A549 (cell line): ENCODE measurements at regions of chr1 and their contacts with region 1.

Region 1: DNA sequence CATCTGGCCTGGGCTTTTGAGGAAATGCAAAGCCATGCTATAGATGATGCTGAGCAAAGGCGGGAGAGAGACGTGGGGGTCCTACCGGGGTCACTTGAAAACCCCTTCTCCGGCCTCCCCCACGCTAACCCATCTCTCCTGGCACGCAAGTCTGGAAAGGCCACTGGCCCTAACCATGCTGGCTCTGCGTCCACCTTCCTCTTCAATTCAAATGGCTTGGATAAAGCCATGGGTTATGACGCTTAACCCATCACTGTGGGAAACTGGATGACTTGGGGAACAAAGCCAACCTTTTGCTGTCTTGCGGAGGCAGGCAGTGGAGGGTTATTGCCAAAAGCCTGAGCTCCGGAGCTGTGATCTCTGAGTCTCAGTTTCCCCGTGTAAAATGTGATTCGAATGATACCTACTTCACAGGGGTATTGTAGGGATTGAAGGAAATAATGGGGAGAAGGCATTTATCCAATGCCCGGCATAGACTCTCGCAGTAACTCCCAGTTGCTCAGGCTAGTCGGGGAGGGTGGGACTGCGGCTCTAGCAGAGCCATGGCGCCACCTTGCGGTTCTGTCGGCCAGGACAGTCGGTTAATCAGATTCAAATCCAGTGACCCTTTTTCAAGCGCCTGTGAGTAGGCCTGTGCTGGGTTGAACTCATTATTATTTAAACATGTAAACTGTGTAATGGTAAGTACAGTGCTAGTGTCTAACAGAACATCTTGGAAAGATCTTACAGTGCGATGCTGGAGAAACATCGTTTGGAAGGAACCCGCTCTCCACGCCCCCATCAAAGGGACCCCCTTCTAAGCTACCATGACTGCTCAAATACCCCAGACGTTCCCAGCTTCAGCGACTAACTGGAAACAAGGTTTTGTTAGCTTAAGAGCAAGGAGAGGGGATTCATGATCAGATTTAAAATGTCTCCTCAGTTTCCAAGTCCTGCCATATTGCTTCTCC is 20.3 kb downstream of the NEK2 start:
- DNase-seq: peak; percentile 66 to 85
- ATAC-seq: peak; percentile 90 to 97
- H3K4me3 ChIP-seq: no peak overlapping the region
- H3K27ac ChIP-seq: peak overlapping the region; percentile 39 to 64; a peak in 4 of 6 replicates
- H3K4me1 ChIP-seq: peaks cover 25% of the 10 kb centered on the region
- CTCF ChIP-seq: peak; percentile 97
- EP300 ChIP-seq: no peak
- POLR2A ChIP-seq: no peak
- RAD21 ChIP-seq: peak; percentile 99

Region 2: DNA sequence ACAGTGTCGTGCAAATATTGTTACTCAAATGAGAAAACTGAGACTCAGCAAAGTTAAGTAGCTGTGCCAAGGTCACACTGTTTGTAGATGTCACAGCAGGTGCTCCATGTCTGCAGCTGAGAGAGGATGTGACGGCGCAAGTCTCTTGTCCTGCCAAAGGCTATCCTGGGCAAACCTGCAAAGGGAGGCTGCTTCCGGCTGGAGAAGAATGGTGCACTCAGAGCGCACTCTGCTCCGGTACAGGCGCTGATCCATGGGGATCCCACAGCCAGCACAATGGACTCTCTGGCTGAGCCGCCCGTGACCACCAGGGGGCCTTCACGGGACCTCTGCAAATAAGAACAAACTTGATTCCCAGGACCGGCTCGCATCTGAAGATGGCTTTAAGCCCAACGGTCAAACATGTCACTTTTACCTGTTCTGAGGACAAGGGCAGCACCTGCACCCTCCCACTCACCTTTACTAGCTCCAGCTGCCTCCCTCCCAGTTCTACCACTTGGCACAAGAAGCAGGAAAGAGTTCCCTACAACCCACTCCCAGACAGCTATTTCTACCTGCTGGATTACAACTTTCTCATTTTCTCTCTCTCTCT is 185.1 kb before region 1 on chr1:
- CTCF ChIA-PET with region 1: interaction called, 31 read pairs
- POLR2A ChIA-PET with region 1: no interaction called
- DNase-seq: peak; percentile 83
- ATAC-seq: peak; percentile 98 to 100
- H3K4me3 ChIP-seq: no peak overlapping the region
- H3K27ac ChIP-seq: 0 out of 6 replicates have a peak overlapping the region, but pooled peaks of 1 of the 2 experiments have one; percentile 4
- H3K4me1 ChIP-seq: 0 out of 3 replicates have a peak, but pooled peaks cover 7% of the 10 kb centered on the region
- CTCF ChIP-seq: peak; percentile 83
- EP300 ChIP-seq: no peak
- POLR2A ChIP-seq: no peak
- RAD21 ChIP-seq: peak; percentile 62 to 64

Region 3: DNA sequence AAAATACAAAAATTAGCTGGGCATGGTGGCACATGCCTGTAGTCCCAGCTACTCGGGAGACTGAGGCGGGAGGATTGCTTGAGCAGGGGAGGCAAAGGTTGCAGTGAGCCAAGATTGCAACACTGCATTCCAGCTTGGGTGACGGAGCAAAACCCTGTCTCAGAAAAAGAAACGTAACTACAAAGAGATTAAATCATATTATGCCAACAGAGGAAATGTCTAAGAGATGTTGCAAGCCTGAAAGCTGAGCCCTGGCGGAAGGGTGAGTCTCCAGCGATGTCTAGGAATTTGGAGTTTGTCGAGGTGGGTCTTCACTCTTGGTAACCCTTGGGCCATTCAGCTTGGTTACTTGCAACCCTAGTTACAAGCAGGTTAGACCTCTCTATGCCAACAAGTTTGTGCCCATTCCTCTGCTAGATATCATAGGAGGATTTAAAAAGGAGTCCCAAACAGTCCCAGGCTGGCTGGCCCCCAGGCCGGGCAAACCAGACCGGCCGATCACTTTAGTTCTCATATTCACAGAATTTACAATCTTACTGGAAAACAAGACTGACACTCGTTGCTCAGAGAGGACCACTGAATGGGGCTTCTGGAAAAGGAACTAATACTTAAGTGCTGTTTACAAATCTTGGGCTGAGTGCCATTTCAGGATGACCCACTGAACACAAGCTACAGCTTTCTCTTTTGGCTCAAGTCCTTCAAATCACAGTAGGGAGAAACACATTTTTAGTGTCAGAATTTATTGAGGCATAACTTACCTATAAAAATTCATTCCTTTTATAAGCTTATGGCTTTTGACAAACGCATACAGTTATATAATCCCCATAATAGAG is 103.3 kb before region 1 on chr1:
- CTCF ChIA-PET with region 1: interaction called, 13 read pairs
- POLR2A ChIA-PET with region 1: interaction called, 3 read pairs
- DNase-seq: peak in 1 of 2 experiments; percentile 29
- ATAC-seq: peak in 1 of 2 experiments; percentile 75; a peak in 3 of 6 replicates
- H3K4me3 ChIP-seq: no peak overlapping the region
- H3K27ac ChIP-seq: peak overlapping the region; percentile 34 to 69; a peak in 5 of 6 replicates
- H3K4me1 ChIP-seq: peaks cover 13% of the 10 kb centered on the region
- CTCF ChIP-seq: no peak
- EP300 ChIP-seq: peak in 1 of 2 experiments; percentile 45; a peak in 1 of 5 replicates
- POLR2A ChIP-seq: no peak
- RAD21 ChIP-seq: no peak

Region 4: DNA sequence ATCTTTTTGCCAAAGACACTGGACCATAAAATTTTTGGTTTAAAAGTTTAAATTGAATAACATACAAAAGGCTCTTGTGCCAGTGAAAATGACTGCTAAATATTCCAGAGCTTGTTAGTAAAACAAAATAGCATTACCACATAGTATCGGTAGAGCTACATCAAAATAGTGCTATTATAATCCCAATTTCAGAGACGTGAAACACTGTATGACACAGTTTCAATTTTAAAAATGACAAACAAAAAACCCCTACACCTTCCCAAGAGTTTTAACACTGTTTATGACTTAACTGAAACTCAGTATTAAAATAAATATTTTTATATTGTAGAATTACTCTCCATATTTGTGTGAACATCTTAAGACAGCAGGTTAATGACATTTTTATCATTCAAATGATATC is 83.1 kb before region 1 on chr1:
- CTCF ChIA-PET with region 1: interaction called, 12 read pairs
- POLR2A ChIA-PET with region 1: no interaction called
- DNase-seq: no peak
- ATAC-seq: no peak
- H3K4me3 ChIP-seq: no peak overlapping the region
- H3K27ac ChIP-seq: no peak overlapping the region
- H3K4me1 ChIP-seq: peaks cover 36% of the 10 kb centered on the region
- CTCF ChIP-seq: no peak
- EP300 ChIP-seq: no peak
- POLR2A ChIP-seq: no peak
- RAD21 ChIP-seq: no peak

Region 5: GRCh38 chr1:211606914-211607755 is 48.0 kb before region 1 on chr1:
- CTCF ChIA-PET with region 1: interaction called, 10 read pairs
- POLR2A ChIA-PET with region 1: no interaction called
- DNase-seq: no peak
- ATAC-seq: no peak
- H3K4me3 ChIP-seq: no peak overlapping the region
- H3K27ac ChIP-seq: no peak overlapping the region
- H3K4me1 ChIP-seq: peaks cover 30% of the 10 kb centered on the region
- CTCF ChIP-seq: no peak
- EP300 ChIP-seq: no peak
- POLR2A ChIP-seq: no peak
- RAD21 ChIP-seq: no peak

Region 6: GRCh38 chr1:211675230-211676105 is 20.4 kb after region 1 on chr1 and contains the start of gene NEK2:
- CTCF ChIA-PET with region 1: interaction called, 22 read pairs
- POLR2A ChIA-PET with region 1: no interaction called
- DNase-seq: peak; percentile 95 to 96
- ATAC-seq: peak; percentile 98 to 99
- H3K4me3 ChIP-seq: peak within 1 kb of the TSS; percentile 92
- H3K27ac ChIP-seq: peak within 1 kb of the TSS; percentile 78 to 84
- H3K4me1 ChIP-seq: peaks cover 19% of the 10 kb centered on the region; the same call in 2 of the 3 replicates
- CTCF ChIP-seq: no peak
- EP300 ChIP-seq: no peak
- POLR2A ChIP-seq: no peak
- RAD21 ChIP-seq: no peak
- polyA plus RNA-seq, gene NEK2: 41.0 and 65.3 TPM in 2 replicates